ENCODE measurements at regions of chr5 and their contacts with region 1.

Region 1: DNA sequence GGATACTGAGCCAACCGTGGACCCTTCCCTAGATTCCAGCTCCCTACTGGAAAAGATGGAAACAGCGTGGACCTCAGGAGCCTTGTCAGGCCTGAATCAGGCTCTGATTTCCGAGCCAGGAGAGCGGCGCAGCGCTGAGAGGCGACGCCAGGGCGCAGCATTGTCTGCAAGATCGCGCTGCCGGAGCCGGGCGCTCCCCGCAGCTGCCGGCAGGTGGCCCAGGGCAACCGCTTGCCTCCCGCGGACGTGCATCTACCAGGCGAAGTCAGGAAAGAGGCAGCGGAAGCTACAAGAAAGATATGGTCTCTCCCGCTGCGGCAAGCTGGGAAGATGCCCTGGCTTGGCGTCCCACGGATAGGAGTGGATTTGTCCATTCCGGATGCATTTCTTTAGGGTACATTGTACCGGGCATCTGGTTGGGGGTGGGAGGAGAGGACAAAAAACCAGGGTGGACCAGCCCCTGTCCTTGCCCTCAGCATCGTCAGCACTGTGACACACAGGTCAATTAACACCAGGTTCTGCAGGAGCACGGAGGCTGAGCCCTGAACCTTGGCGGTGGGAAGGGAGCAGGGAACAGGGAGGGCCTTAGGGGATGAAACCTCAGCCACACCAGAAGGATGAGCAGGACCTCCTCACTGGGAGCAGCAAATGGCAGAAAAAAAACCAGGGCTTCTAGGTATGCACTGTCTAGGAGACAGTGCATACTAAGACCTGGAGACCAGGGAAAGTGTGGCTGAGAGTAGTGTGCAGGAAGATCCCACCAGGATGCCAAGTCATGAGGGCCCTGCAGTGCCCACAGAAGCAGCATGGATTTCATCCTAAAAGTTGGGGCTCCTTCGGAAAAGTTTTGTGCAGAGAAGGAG is 55.9 kb downstream of the SFXN1 start:
- DNase-seq: peak; percentile 64 to 90 (median 79)
- ATAC-seq: peak; percentile 97 to 99 (median 98)
- H3K4me3 ChIP-seq: peak overlapping the region in 1 of 2 donors; percentile 26
- H3K4me3 Mint-ChIP-seq: peak overlapping the region; percentile 57 to 74 (median 63)
- H3K27ac ChIP-seq: no peak overlapping the region
- H3K27ac Mint-ChIP-seq: peak overlapping the region; percentile 31 to 58
- H3K4me1 ChIP-seq: peaks cover 0 to 13% of the 10 kb centered on the region in 2 experiments
- H3K4me1 Mint-ChIP-seq: peaks cover 19 to 29% (median 23%) of the 10 kb centered on the region in 3 donors
- H3K27me3 ChIP-seq: peaks cover 0 to 3% of the 10 kb centered on the region in 2 experiments
- H3K27me3 Mint-ChIP-seq: no peaks in the 10 kb centered on the region

Region 2: DNA sequence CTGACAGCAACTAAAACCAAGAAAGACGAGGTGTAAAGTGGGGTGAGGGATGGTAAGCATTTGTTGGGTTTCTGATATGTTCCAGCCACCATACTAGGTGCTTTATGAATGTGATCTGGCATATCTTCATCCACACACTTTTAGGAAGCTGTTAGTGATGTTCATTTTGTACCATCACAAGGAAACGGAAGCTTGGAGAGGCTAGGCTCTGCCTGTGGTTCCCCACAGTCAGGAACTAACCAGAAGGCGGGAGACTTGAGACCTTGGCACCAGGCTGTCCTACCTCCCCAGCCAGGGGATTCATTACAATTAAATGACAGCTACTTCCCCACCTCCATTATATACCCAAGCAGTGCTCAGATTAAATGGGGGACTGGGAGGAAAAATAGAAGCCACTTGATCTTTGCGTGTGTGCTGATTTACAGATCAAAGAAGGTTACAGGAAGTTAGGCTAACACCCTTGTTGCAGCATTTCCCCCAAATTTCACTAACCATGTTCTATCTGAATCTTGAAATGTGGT is 12.9 kb before region 1 on chr5:
- CTCF ChIA-PET with region 1: interaction called, 3 to 11 read pairs
- POLR2A ChIA-PET with region 1: no interaction called
- DNase-seq: peak in 21 of 35 experiments; percentile 11 to 68 (median 21)
- ATAC-seq: peak; percentile 73 to 83 (median 78)
- H3K4me3 ChIP-seq: peak overlapping the region; percentile 3 to 40
- H3K4me3 Mint-ChIP-seq: peak overlapping the region; percentile 50 to 80 (median 61)
- H3K27ac ChIP-seq: peak overlapping the region; percentile 40
- H3K27ac Mint-ChIP-seq: peak overlapping the region; percentile 97
- H3K4me1 ChIP-seq: peaks cover 27 to 41% of the 10 kb centered on the region in 2 experiments
- H3K4me1 Mint-ChIP-seq: peaks cover 75 to 86% (median 84%) of the 10 kb centered on the region in 3 donors
- H3K27me3 ChIP-seq: no peaks in the 10 kb centered on the region
- H3K27me3 Mint-ChIP-seq: no peaks in the 10 kb centered on the region

Region 3: DNA sequence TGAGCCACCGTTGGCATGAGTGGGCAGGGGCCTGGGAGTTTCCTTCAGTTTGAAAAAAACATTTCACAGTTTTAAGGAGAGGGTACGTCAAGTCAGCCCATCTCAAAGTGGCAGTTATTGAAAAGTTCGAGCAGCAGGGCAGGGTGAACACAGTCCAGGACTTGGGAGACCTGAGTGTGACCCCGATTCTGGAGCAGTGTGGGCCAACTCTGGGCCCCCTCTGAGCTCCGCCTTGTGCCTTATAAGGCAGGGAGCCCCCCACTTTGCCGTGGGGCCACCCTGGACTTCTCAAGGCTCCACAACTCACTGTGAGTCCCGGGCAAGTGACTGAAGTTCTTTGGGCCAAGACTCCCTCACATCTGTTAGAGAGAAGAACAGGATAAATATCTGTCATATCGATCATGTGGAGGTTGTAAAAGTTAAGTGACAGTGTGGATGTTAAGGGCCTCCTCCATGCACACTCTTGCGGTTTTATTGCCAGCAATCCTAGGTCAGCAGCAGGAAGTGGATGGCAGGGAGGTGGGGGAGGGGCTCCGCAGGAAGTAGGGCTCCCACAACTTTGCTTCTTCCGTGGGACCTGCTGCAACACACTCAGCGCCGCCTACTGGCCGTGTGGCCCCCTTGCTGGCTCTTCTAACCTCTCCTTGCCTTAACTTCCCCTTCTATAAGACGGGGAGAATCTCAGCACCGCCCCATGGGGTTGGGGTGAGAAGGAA is 162.0 kb after region 1 on chr5:
- CTCF ChIA-PET with region 1: interaction called, 12 to 23 read pairs
- POLR2A ChIA-PET with region 1: no interaction called
- DNase-seq: peak; percentile 40 to 80 (median 63)
- ATAC-seq: peak; percentile 73 to 86 (median 78)
- H3K4me3 ChIP-seq: peak overlapping the region in 1 of 2 donors; percentile 5
- H3K4me3 Mint-ChIP-seq: peak overlapping the region in 1 of 3 donors; percentile 37
- H3K27ac ChIP-seq: peak overlapping the region; percentile 47
- H3K27ac Mint-ChIP-seq: peak overlapping the region; percentile 88 to 92
- H3K4me1 ChIP-seq: peaks cover 15 to 16% of the 10 kb centered on the region in 2 experiments
- H3K4me1 Mint-ChIP-seq: peaks cover 33 to 55% (median 35%) of the 10 kb centered on the region in 3 donors
- H3K27me3 ChIP-seq: peaks cover 0 to 2% of the 10 kb centered on the region in 2 experiments
- H3K27me3 Mint-ChIP-seq: no peaks in the 10 kb centered on the region

Region 4: DNA sequence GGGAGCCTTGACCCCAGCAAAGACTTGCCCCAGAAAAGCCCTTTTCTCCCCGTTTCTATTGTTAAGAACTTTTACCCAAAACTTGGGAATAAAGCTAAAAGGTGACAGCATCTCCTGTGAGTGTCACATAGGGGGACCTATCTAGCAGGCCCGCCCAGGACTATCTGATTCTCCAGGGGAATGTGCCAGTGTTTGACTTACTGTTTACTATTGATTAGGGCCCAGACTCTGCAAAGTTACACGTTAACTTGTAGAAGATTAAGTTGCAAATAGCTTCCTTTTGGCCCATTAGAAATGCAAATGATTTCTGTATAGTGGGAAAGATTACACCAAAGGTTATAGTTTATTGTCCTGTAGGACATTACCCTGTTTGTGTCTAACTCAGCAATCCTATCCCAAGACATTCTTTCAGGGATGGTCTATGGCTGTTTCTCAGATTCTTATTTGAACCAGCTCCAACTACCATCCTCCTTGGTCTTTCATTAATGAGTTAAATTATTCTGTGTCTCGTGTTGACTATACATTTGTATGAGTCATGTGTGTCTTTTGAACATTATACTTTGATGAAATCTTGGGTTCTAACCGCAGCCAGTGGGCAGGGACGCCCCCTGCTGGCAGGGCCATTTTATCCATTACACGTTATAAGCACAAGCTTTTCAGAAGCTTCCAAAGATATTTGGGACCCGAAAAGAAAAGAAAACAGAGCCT is 184.3 kb after region 1 on chr5:
- CTCF ChIA-PET with region 1: interaction called, 8 to 13 read pairs
- POLR2A ChIA-PET with region 1: no interaction called
- DNase-seq: peak in 30 of 35 experiments; percentile 11 to 67 (median 31)
- ATAC-seq: peak in 1 of 4 experiments; percentile 37
- H3K4me3 ChIP-seq: no peak overlapping the region
- H3K4me3 Mint-ChIP-seq: no peak overlapping the region
- H3K27ac ChIP-seq: no peak overlapping the region
- H3K27ac Mint-ChIP-seq: no peak overlapping the region
- H3K4me1 ChIP-seq: no peaks in the 10 kb centered on the region
- H3K4me1 Mint-ChIP-seq: peaks cover 2 to 8% (median 2%) of the 10 kb centered on the region in 3 donors
- H3K27me3 ChIP-seq: no peaks in the 10 kb centered on the region
- H3K27me3 Mint-ChIP-seq: peaks cover 0 to 5% of the 10 kb centered on the region in 2 donors